CD8-positive, alpha-beta T cell (primary cell): ENCODE measurements at regions of chr13 and their contacts with region 1.

Region 1: GRCh38 chr13:45367358-45367757 is 26.4 kb upstream of the TPT1 start:
- DNase-seq: peak; percentile 71 to 98 (median 89)
- ATAC-seq: peak; percentile 98
- H3K4me3 ChIP-seq: no peak overlapping the region
- H3K4me3 Mint-ChIP-seq: peak overlapping the region; percentile 40
- H3K27ac ChIP-seq: peak overlapping the region in 1 of 2 experiments; percentile 66
- H3K27ac Mint-ChIP-seq: peak overlapping the region; percentile 89
- H3K4me1 ChIP-seq: peaks cover 27% of the 10 kb centered on the region
- H3K4me1 Mint-ChIP-seq: peaks cover 49% of the 10 kb centered on the region
- H3K27me3 ChIP-seq: no peaks in the 10 kb centered on the region
- H3K27me3 Mint-ChIP-seq: no peaks in the 10 kb centered on the region
- CTCF ChIP-seq: no peak

Region 2: DNA sequence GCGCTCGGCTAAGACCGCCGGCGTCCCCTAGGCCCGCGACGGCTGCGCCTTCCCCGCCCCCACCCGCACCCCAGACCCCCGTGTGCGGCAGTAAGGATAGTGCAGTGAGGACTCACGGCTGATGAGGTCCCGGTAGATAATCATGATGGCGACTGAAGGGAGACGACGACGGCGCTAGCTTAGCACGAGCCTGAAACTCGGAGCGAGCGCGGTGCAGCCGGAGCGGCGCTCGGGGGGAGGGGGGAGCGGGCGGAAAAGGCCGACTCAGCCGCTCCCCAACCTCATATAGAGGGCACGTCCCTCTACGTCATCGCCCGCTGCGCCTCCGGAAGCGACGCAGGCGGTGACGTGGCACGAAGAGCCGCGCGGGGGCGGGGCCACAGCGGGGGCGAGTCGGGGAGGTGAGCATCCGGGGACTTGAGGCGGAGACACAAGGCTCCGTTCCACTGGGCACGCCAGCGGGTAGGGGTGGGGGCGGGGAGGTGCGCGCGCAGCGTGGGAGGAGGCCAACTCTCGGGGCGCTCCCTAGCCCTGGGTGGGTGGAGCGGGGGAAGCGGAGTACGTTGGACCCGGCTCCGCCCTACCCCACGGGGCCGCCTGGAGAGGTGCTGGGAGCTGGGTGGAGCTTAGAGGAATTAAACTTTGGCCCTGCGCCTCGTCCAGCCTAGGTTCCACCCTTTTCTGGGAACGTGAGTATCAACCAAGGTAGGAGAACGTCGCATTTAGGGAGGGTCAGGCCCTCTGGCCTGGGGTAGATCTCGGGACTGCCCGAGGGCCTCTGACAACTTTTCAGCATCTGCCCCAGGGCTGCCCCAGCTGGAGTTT is 26.2 kb before region 1 on chr13 and contains the start of gene TPT1:
- CTCF ChIA-PET with region 1: interaction called, 15 read pairs
- POLR2A ChIA-PET with region 1: interaction called, 28 read pairs
- intact Hi-C with region 1: loop called (anchors 1 kb)
- DNase-seq: peak; percentile 99 to 100 (median 100)
- ATAC-seq: peak; percentile 86
- H3K4me3 ChIP-seq: peak within 1 kb of the TSS; percentile 83 to 89
- H3K4me3 Mint-ChIP-seq: peak within 1 kb of the TSS; percentile 99
- H3K27ac ChIP-seq: peak within 1 kb of the TSS; percentile 96 to 99
- H3K27ac Mint-ChIP-seq: peak within 1 kb of the TSS; percentile 99
- H3K4me1 ChIP-seq: peaks cover 42% of the 10 kb centered on the region
- H3K4me1 Mint-ChIP-seq: peaks cover 63% of the 10 kb centered on the region
- H3K27me3 ChIP-seq: no peaks in the 10 kb centered on the region
- H3K27me3 Mint-ChIP-seq: no peaks in the 10 kb centered on the region
- CTCF ChIP-seq: no peak
- total RNA-seq, gene TPT1: 8,260 to 8,503 TPM

Region 3: GRCh38 chr13:45393941-45394570 is 26.7 kb after region 1 on chr13:
- CTCF ChIA-PET with region 1: interaction called, 39 read pairs
- POLR2A ChIA-PET with region 1: interaction called, 8 read pairs
- intact Hi-C with region 1: loop called in 1 of 2 experiments (anchors 1 kb)
- DNase-seq: peak in 4 of 9 experiments; percentile 31 to 69 (median 48)
- ATAC-seq: no peak
- H3K4me3 ChIP-seq: no peak overlapping the region
- H3K4me3 Mint-ChIP-seq: no peak overlapping the region
- H3K27ac ChIP-seq: no peak overlapping the region
- H3K27ac Mint-ChIP-seq: no peak overlapping the region
- H3K4me1 ChIP-seq: peaks cover 43% of the 10 kb centered on the region
- H3K4me1 Mint-ChIP-seq: peaks cover 46% of the 10 kb centered on the region
- H3K27me3 ChIP-seq: no peaks in the 10 kb centered on the region
- H3K27me3 Mint-ChIP-seq: no peaks in the 10 kb centered on the region
- CTCF ChIP-seq: peak; percentile 38

Region 4: GRCh38 chr13:45417790-45418534 is 50.6 kb after region 1 on chr13 and contains the start of gene SLC25A30:
- CTCF ChIA-PET with region 1: interaction called, 25 read pairs
- POLR2A ChIA-PET with region 1: interaction called, 13 read pairs
- intact Hi-C with region 1: loop called (anchors 1 to 2 kb)
- DNase-seq: peak; percentile 83 to 96 (median 91)
- ATAC-seq: peak; percentile 90
- H3K4me3 ChIP-seq: peak within 1 kb of the TSS; percentile 88 to 97
- H3K4me3 Mint-ChIP-seq: peak within 1 kb of the TSS; percentile 94
- H3K27ac ChIP-seq: peak within 1 kb of the TSS; percentile 81 to 85
- H3K27ac Mint-ChIP-seq: peak within 1 kb of the TSS; percentile 96
- H3K4me1 ChIP-seq: peaks cover 24% of the 10 kb centered on the region
- H3K4me1 Mint-ChIP-seq: peaks cover 32% of the 10 kb centered on the region
- H3K27me3 ChIP-seq: no peaks in the 10 kb centered on the region
- H3K27me3 Mint-ChIP-seq: no peaks in the 10 kb centered on the region
- CTCF ChIP-seq: no peak
- total RNA-seq, gene SLC25A30: 37.7 to 40.5 TPM

Region 5: GRCh38 chr13:45473627-45474026 is 106.3 kb after region 1 on chr13:
- CTCF ChIA-PET with region 1: interaction called, 13 read pairs
- POLR2A ChIA-PET with region 1: no interaction called
- intact Hi-C with region 1: no loop called
- DNase-seq: peak in 4 of 9 experiments; percentile 14 to 52 (median 38)
- ATAC-seq: peak; percentile 85
- H3K4me3 ChIP-seq: no peak overlapping the region
- H3K4me3 Mint-ChIP-seq: no peak overlapping the region
- H3K27ac ChIP-seq: no peak overlapping the region
- H3K27ac Mint-ChIP-seq: peak overlapping the region; percentile 41
- H3K4me1 ChIP-seq: peaks cover 8% of the 10 kb centered on the region
- H3K4me1 Mint-ChIP-seq: peaks cover 53% of the 10 kb centered on the region
- H3K27me3 ChIP-seq: no peaks in the 10 kb centered on the region
- H3K27me3 Mint-ChIP-seq: no peaks in the 10 kb centered on the region
- CTCF ChIP-seq: peak; percentile 33

Region 6: DNA sequence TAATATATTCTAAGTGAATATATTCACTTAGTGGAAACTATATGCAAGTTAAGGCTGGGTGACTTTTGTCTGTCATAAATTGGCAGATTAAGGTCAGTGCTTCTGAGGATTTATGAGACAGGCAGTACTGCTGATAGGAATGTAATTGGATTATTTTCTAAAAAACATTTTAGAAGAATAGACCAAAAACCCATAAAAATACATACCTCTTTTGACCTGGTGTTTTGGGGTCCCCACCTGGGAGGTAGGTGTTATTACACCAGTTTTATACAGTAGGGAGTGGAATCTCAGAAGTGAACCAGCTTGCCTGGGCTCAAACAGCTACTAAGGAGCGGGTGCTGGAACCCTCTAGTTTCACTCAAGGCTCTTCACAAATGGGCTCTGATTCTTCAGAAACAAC is 122.7 kb after region 1 on chr13:
- CTCF ChIA-PET with region 1: interaction called, 25 read pairs
- POLR2A ChIA-PET with region 1: no interaction called
- intact Hi-C with region 1: loop called (anchors 1 to 2 kb)
- DNase-seq: peak in 4 of 9 experiments; percentile 19 to 62 (median 42)
- ATAC-seq: peak; percentile 93
- H3K4me3 ChIP-seq: no peak overlapping the region
- H3K4me3 Mint-ChIP-seq: no peak overlapping the region
- H3K27ac ChIP-seq: no peak overlapping the region
- H3K27ac Mint-ChIP-seq: no peak overlapping the region
- H3K4me1 ChIP-seq: no peaks in the 10 kb centered on the region
- H3K4me1 Mint-ChIP-seq: no peaks in the 10 kb centered on the region
- H3K27me3 ChIP-seq: no peaks in the 10 kb centered on the region
- H3K27me3 Mint-ChIP-seq: no peaks in the 10 kb centered on the region
- CTCF ChIP-seq: peak; percentile 65